ENCODE measurements at regions of chr2 and their contacts with region 1.

Region 1: DNA sequence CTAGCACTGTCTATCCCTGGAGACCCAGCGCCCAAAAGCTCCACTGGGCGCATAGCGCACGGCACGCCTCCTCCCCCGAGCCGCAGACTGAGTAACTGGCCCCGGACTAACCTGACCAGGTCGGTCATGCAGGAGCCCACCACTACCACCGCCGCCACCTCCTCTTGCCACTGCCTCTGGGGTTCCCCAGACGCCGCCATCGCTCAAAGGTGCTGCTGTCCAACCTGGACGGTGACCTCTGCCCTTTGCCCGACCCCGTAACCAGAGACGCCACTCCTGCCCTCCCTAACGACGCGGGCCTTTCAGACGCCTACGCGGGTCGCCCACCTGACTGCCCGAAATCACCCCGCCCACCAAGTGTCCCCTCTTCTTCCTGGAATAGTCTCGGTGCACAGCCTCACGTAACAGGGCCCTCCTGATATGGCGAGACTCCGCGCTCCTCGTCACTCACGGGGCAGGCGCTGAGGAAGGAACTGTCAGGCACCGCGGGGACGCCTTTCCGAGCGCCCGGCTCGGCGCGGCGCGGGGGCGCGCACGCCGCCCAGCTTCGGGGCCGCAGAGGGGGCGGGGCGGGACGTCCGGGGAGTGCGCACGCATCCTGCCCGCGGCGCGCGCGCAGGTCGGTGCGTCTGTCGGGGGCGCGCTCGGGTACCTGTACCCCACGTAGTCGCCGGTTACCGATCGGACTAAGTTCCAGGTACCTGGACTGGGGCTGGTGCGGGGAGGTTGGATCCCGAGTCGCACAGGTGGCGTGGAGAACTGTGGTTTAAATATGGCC is at the starts of genes BABAM2 and RBKS:
- DNase-seq: peak; percentile 91
- H3K4me3 Mint-ChIP-seq: peak within 1 kb of the TSS; percentile 93
- H3K27ac Mint-ChIP-seq: peak within 1 kb of the TSS; percentile 98
- H3K4me1 Mint-ChIP-seq: peaks cover 62% of the 10 kb centered on the region
- H3K27me3 Mint-ChIP-seq: no peaks in the 10 kb centered on the region
- total RNA-seq, gene BABAM2: 51.4 to 56.6 TPM
- total RNA-seq, gene RBKS: 2.2 to 2.8 TPM

Region 2: GRCh38 chr2:27875089-27875881 is 15.1 kb before region 1 on chr2:
- CTCF ChIA-PET with region 1: no interaction called
- POLR2A ChIA-PET with region 1: no interaction called
- DNase-seq: no peak
- H3K4me3 Mint-ChIP-seq: no peak overlapping the region
- H3K27ac Mint-ChIP-seq: no peak overlapping the region
- H3K4me1 Mint-ChIP-seq: no peaks in the 10 kb centered on the region
- H3K27me3 Mint-ChIP-seq: no peaks in the 10 kb centered on the region

Region 3: GRCh38 chr2:27960237-27960912 is 70.0 kb after region 1 on chr2:
- CTCF ChIA-PET with region 1: no interaction called
- POLR2A ChIA-PET with region 1: interaction called, 19 read pairs
- DNase-seq: peak; percentile 36
- H3K4me3 Mint-ChIP-seq: peak overlapping the region; percentile 31
- H3K27ac Mint-ChIP-seq: peak overlapping the region; percentile 90
- H3K4me1 Mint-ChIP-seq: peaks cover 77% of the 10 kb centered on the region
- H3K27me3 Mint-ChIP-seq: no peaks in the 10 kb centered on the region

Measured in activated CD4-positive, alpha-beta memory T cell treated with anti-CD3 and anti-CD28 coated beads, Interleukin-2, amount 10 ng/mL, durations not matched to agents 7 days and 5 days (primary cell).